Heart left ventricle (tissue), 16 donors: ENCODE measurements at regions of chr2 and their contacts with region 1.

Region 1: GRCh38 chr2:237739101-237739500 is 59.5 kb upstream of the RBM44 start:
- DNase-seq: peak; percentile 71 to 86 (median 85)
- ATAC-seq: peak; percentile 92 to 95 (median 93)
- H3K4me3 ChIP-seq: peak overlapping the region in 1 of 12 donors; percentile 4
- H3K27ac ChIP-seq: peak overlapping the region; percentile 45 to 86 (median 80)
- H3K4me1 ChIP-seq: peaks cover 0 to 99% (median 90%) of the 10 kb centered on the region in 12 donors
- H3K27me3 ChIP-seq: no peaks in the 10 kb centered on the region
- CTCF ChIP-seq: peak in 3 of 12 donors; percentile 17 to 27 (median 18)
- POLR2A ChIP-seq: no peak

Region 2: GRCh38 chr2:237700512-237701032 is 38.5 kb before region 1 on chr2:
- intact Hi-C with region 1: loop called in 5 of 10 experiments (anchors 2 to 5 kb)
- DNase-seq: peak; percentile 73 to 84 (median 83)
- ATAC-seq: peak; percentile 40 to 77 (median 69)
- H3K4me3 ChIP-seq: peak overlapping the region in 3 of 12 donors; percentile 5 to 17 (median 10)
- H3K27ac ChIP-seq: peak overlapping the region; percentile 60 to 98 (median 84)
- H3K4me1 ChIP-seq: peaks cover 58 to 100% (median 99%) of the 10 kb centered on the region in 12 donors
- H3K27me3 ChIP-seq: no peaks in the 10 kb centered on the region
- CTCF ChIP-seq: peak in 1 of 12 donors; percentile 5
- POLR2A ChIP-seq: no peak

Region 3: DNA sequence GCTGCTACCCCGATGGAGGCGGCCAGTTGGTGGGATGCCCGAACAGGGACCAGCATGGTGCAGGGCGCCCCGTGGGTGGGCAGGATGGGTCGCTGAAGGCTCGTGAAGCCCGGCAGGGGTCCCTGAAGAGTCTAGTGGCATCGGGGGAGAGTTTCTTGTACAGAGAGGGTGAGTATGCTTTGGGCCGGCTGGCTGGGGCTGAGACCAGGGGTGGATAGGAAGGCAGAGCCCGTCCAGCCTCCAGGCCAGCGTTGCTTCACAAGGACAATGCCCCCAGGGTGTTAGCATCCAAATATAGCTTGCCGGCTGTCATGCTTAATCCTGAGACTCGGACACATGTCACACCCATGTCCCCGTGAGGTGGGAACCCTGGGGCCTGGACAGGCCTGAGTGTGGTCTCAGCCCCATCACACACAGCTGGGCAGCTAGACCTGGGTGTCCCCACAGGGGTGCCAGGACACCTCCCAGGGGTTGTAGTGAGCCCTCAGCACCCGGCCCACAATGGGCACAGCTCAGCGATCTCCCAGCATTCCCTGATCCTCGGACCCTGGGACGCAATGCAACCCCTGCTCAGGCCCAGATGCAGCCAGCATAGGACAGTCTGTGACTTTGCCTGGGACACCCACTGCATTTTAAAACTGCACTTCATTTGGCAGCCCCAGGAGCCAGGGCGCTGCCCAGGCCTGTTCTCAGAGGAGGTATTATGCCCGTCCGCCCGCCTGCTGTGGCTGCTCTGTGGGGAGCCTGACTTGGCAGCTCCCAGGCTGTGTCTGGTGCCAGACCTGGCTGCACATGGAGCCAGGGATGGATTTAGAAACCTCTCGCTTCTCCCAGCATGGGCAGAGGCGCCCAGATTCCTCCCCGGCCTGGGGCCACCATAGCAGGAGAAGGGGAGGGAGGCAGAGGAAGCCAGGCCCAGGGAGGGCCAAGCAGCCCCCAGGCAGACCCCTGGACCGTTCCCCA is 156.7 kb after region 1 on chr2:
- intact Hi-C with region 1: no loop called
- DNase-seq: peak in 4 of 5 donors; percentile 75 to 90 (median 84)
- ATAC-seq: peak; percentile 83 to 90 (median 85)
- H3K4me3 ChIP-seq: no peak overlapping the region
- H3K27ac ChIP-seq: peak overlapping the region; percentile 80 to 99 (median 95)
- H3K4me1 ChIP-seq: peaks cover 0 to 80% (median 34%) of the 10 kb centered on the region in 12 donors
- H3K27me3 ChIP-seq: no peaks in the 10 kb centered on the region
- CTCF ChIP-seq: no peak
- POLR2A ChIP-seq: no peak